Natural killer cell (primary cell): ENCODE measurements at regions of chrX and their contacts with region 1.

Region 1: DNA sequence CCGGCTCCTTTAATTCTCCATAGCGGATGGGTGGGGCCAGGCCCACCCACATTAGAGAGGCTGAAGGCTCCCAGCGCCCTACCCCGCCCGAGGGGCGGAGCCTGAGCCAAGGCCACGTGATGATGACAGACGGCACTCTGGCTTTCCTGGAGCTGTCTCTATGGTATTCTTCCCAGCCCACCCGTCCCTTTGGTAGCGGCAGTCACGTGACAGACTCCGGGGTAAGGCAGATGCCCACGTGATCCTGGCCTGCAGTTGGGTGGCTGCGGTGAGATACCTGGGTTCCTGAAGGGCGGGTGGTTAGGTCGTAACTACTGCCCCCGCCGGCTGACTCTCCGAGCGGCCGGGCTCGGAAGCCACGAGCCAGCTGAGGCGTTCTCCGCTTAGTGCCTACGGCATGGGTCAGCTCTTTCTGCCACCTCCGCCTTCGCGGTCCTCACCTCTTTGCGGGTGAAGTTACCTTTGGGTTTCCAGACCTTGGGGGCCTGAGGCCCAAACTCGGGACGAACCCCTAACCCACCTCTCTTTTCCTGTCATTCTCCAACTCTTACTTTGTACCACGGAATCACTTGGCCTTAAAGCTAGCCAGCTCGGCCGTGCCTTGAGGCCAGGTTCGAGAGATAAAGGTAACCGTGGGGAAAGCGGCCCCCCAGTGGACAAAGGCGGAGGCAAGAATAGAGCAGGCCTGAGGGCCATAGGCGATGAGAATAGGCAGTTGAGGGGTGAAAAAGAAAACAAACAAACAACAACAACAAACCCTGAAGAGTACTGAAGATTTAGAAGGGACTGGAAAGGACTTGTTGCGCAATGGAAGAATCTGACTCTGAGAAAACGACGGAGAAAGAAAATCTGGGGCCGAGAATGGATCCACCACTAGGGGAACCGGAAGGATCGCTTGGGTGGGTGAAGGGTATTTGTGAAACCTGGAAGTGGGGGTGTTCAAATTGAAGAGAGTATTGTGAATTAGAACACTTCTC is at the start of gene RRAGB:
- DNase-seq: peak; percentile 75 to 95
- ATAC-seq: peak; percentile 94 to 99 (median 95)
- H3K4me3 ChIP-seq: peak within 1 kb of the TSS; percentile 67
- H3K4me3 Mint-ChIP-seq: peak within 1 kb of the TSS; percentile 86
- H3K27ac ChIP-seq: peak within 1 kb of the TSS; percentile 95
- H3K27ac Mint-ChIP-seq: peak within 1 kb of the TSS; percentile 81 to 88
- H3K4me1 ChIP-seq: peaks cover 11% of the 10 kb centered on the region
- H3K4me1 Mint-ChIP-seq: peaks cover 16 to 25% of the 10 kb centered on the region in 2 donors
- H3K27me3 ChIP-seq: no peaks in the 10 kb centered on the region
- H3K27me3 Mint-ChIP-seq: peaks cover 0 to under 1% of the 10 kb centered on the region in 2 donors
- CTCF ChIP-seq: no peak
- total RNA-seq, gene RRAGB: 13.5 to 17.5 (median 14.5) TPM

Region 2: GRCh38 chrX:56563231-56564161 is 845.7 kb after region 1 on chrX and contains the start of gene UBQLN2:
- intact Hi-C with region 1: loop called (anchors 5 kb)
- DNase-seq: peak; percentile 69 to 86
- ATAC-seq: peak; percentile 83 to 93 (median 86)
- H3K4me3 ChIP-seq: peak within 1 kb of the TSS; percentile 73
- H3K4me3 Mint-ChIP-seq: peak within 1 kb of the TSS; percentile 85
- H3K27ac ChIP-seq: peak within 1 kb of the TSS; percentile 98
- H3K27ac Mint-ChIP-seq: peak within 1 kb of the TSS; percentile 92 to 93
- H3K4me1 ChIP-seq: peaks cover 9% of the 10 kb centered on the region
- H3K4me1 Mint-ChIP-seq: peaks cover 18 to 27% of the 10 kb centered on the region in 2 donors
- H3K27me3 ChIP-seq: no peaks in the 10 kb centered on the region
- H3K27me3 Mint-ChIP-seq: peaks cover 2 to 6% of the 10 kb centered on the region in 2 donors
- CTCF ChIP-seq: no peak
- total RNA-seq, gene UBQLN2: 36.2 to 43.4 (median 39.7) TPM